Panc1 (cell line): ENCODE measurements at regions of chr2 and their contacts with region 1.

Region 1: DNA sequence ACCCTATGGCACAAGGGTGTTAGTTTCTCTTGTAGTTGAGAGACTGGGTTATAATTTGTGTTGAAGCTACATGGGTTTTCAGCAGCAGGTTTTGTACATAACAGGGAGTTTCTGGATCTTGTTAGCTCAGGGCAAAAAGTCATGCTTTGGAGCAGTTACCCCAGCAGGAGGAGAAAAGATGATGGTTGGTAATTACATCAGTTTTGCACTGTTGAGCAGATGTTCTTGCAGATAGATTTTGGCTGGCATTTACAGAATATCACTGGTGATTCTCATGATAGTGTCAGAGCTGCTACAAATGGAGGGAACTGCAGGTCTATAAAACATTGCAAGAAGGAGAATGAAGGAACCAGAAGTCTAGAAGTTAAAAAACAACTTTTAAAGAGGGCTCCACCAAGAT is 215.2 kb upstream of the ATP5MC3 start:
- DNase-seq: no peak
- ATAC-seq: no peak
- H3K4me3 ChIP-seq: no peak overlapping the region
- H3K27ac ChIP-seq: no peak overlapping the region
- H3K4me1 ChIP-seq: no peaks in the 10 kb centered on the region
- H3K27me3 ChIP-seq: 0 out of 2 replicates have a peak, but pooled peaks cover 2% of the 10 kb centered on the region
- CTCF ChIP-seq: no peak

Region 2: GRCh38 chr2:175432021-175432420 is 35.3 kb after region 1 on chr2:
- CTCF ChIA-PET with region 1: no interaction called
- POLR2A ChIA-PET with region 1: no interaction called
- in situ Hi-C with region 1: no loop called
- intact Hi-C with region 1: no loop called
- DNase-seq: no peak
- ATAC-seq: no peak
- H3K4me3 ChIP-seq: no peak overlapping the region
- H3K27ac ChIP-seq: no peak overlapping the region
- H3K4me1 ChIP-seq: no peaks in the 10 kb centered on the region
- H3K27me3 ChIP-seq: no peaks in the 10 kb centered on the region; the same call in 1 of the 2 replicates
- CTCF ChIP-seq: no peak

Region 3: DNA sequence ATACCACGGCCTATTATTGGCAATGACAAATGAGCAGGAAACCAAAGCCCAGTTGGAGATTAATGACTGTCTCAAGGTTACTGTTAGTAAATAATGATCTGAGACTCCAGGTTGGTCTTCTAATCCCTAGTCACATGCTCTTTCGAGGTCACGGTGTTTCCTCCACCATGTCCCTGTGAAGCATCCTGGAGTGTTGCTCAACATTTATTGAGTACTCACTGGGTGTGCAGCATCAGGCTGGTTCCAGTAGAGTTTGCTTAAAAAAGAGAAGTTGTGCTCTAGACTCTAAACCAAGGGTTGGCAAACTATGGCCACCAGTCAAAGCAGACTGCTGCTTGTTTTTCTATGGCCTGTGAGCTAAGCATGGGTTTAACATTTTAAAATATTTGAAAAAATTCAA is 48.6 kb after region 1 on chr2:
- CTCF ChIA-PET with region 1: no interaction called
- POLR2A ChIA-PET with region 1: no interaction called
- in situ Hi-C with region 1: no loop called
- intact Hi-C with region 1: loop called (anchors 2 kb)
- DNase-seq: no peak
- ATAC-seq: no peak
- H3K4me3 ChIP-seq: no peak overlapping the region
- H3K27ac ChIP-seq: no peak overlapping the region
- H3K4me1 ChIP-seq: no peaks in the 10 kb centered on the region
- H3K27me3 ChIP-seq: no peaks in the 10 kb centered on the region; the same call in 1 of the 2 replicates
- CTCF ChIP-seq: no peak